Activated CD4-positive, alpha-beta T cell treated with anti-CD3 and anti-CD28 coated beads for 36 hours (primary cell): ENCODE measurements at regions of chr3 and their contacts with region 1.

Region 1: GRCh38 chr3:140863580-140864009 is 78.0 kb upstream of the SLC25A36 start:
- DNase-seq: peak; percentile 68
- ATAC-seq: peak; percentile 30
- H3K4me3 Mint-ChIP-seq: no peak overlapping the region
- H3K27ac Mint-ChIP-seq: no peak overlapping the region
- H3K4me1 Mint-ChIP-seq: no peaks in the 10 kb centered on the region
- H3K27me3 Mint-ChIP-seq: peaks cover 6% of the 10 kb centered on the region

Region 2: GRCh38 chr3:139935016-139935865 is 928.4 kb before region 1 on chr3 and contains the start of gene CLSTN2:
- CTCF ChIA-PET with region 1: no interaction called
- POLR2A ChIA-PET with region 1: no interaction called
- intact Hi-C with region 1: loop called in 1 of 2 experiments (anchors 1 kb)
- DNase-seq: peak; percentile 69
- ATAC-seq: peak; percentile 70
- H3K4me3 Mint-ChIP-seq: no peak within 1 kb of the TSS
- H3K27ac Mint-ChIP-seq: no peak within 1 kb of the TSS
- H3K4me1 Mint-ChIP-seq: peaks cover 9% of the 10 kb centered on the region
- H3K27me3 Mint-ChIP-seq: peaks cover 45% of the 10 kb centered on the region
- total RNA-seq, gene CLSTN2: not detected

Region 3: DNA sequence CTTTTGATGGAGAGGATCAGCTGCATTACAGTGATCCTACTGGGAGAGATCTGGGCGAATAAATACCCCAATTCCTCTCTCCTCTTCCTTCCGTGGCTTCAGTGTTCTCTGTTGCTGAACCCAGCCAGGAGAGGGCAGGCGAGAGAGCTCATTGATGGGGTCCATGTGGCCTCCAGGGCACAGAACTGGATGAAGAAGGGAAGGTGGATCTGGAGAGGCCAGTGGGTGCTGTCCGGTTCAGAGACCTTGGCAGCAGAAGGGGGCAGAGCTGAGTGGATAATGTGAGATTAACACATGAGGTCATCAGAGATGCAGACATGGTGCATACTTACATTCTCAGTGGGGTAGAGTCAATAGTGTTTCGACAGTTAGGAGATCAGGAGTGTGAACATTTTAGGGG is 735.0 kb before region 1 on chr3:
- CTCF ChIA-PET with region 1: no interaction called
- POLR2A ChIA-PET with region 1: no interaction called
- intact Hi-C with region 1: loop called in 1 of 2 experiments (anchors 2 kb)
- DNase-seq: peak; percentile 35
- ATAC-seq: no peak
- H3K4me3 Mint-ChIP-seq: no peak overlapping the region
- H3K27ac Mint-ChIP-seq: no peak overlapping the region
- H3K4me1 Mint-ChIP-seq: no peaks in the 10 kb centered on the region
- H3K27me3 Mint-ChIP-seq: peaks cover 3% of the 10 kb centered on the region

Region 4: GRCh38 chr3:140552898-140553297 is 310.7 kb before region 1 on chr3:
- CTCF ChIA-PET with region 1: no interaction called
- POLR2A ChIA-PET with region 1: no interaction called
- intact Hi-C with region 1: loop called in 1 of 2 experiments (anchors 10 kb)
- DNase-seq: peak; percentile 6
- ATAC-seq: no peak
- H3K4me3 Mint-ChIP-seq: no peak overlapping the region
- H3K27ac Mint-ChIP-seq: no peak overlapping the region
- H3K4me1 Mint-ChIP-seq: no peaks in the 10 kb centered on the region
- H3K27me3 Mint-ChIP-seq: no peaks in the 10 kb centered on the region

Region 5: GRCh38 chr3:140794507-140794906 is 69.1 kb before region 1 on chr3:
- CTCF ChIA-PET with region 1: no interaction called
- POLR2A ChIA-PET with region 1: no interaction called
- intact Hi-C with region 1: no loop called
- DNase-seq: no peak
- ATAC-seq: no peak
- H3K4me3 Mint-ChIP-seq: no peak overlapping the region
- H3K27ac Mint-ChIP-seq: no peak overlapping the region
- H3K4me1 Mint-ChIP-seq: no peaks in the 10 kb centered on the region
- H3K27me3 Mint-ChIP-seq: no peaks in the 10 kb centered on the region